GM12878 (cell line): ENCODE measurements at regions of chr1 and their contacts with region 1.

Region 1: DNA sequence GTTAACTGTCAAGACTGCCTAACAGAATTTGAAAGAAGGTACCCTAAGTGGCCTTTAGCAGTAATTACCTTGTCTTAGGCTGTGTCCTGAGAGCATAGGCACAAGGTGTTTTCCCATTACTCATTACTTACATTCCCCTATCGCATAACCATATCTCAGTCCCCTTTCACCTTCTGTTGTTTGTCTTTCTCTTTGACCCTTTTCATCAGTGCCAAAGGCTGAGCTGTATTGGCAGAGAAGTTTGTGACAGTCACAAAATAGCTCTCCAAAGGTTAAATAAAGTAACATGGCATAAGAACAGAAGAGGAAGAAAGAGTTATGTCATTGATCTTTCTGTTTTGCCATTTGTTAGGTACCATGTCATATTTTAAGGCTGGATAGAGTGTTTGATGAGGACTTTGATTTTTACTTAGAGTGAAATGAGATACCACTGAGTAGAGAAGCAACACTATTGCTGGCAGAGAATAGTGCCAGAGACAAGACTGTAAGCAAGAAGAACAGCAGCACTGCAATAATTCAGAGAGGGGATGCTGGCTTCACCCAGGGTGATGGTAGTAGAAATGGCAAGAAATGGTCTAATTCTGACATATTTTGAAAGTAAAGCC is 497.8 kb downstream of the TTLL7 start:
- DNase-seq: peak; percentile 84
- ATAC-seq: peak; percentile 91
- H3K4me3 ChIP-seq: peak overlapping the region; percentile 4; the same call in 1 of the 2 replicates
- H3K27ac ChIP-seq: peak overlapping the region; percentile 90
- H3K4me1 ChIP-seq: peaks cover 34% of the 10 kb centered on the region
- H3K27me3 ChIP-seq: no peaks in the 10 kb centered on the region
- CTCF ChIP-seq: no peak
- EP300 ChIP-seq: peak; percentile 86 to 95
- POLR2A ChIP-seq: no peak
- RAD21 ChIP-seq: 0 out of 2 replicates have a peak, but pooled peaks have one; percentile 18

Region 2: DNA sequence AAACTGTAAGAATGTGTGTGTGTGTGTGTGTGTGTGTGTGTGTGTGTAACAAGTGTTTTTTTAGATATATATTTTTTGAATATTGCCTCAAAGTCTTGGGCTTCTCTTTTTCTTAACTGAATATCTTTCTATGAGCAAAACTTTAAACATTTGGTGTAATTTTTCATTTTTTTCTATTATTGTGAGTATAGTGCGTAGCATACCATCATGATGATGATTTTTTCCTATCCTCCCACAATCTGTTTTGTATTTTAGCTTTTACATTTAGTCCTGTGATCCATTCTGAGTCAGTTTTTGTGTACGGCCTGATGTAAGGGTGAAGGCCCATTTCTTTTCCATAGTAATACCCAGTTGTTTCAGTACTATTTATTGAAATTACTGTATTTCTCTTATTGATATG is 182.7 kb before region 1 on chr1:
- CTCF ChIA-PET with region 1: no interaction called
- POLR2A ChIA-PET with region 1: no interaction called
- RAD21 ChIA-PET with region 1: no interaction called
- SMC1A ChIA-PET with region 1: no interaction called
- in situ Hi-C with region 1: no loop called
- intact Hi-C with region 1: loop called (anchors 5 kb)
- DNase-seq: no peak
- ATAC-seq: no peak
- H3K4me3 ChIP-seq: no peak overlapping the region
- H3K27ac ChIP-seq: no peak overlapping the region
- H3K4me1 ChIP-seq: no peaks in the 10 kb centered on the region
- H3K27me3 ChIP-seq: no peaks in the 10 kb centered on the region
- CTCF ChIP-seq: no peak
- EP300 ChIP-seq: no peak
- POLR2A ChIP-seq: no peak
- RAD21 ChIP-seq: no peak

Region 3: GRCh38 chr1:83490988-83491387 is 10.1 kb before region 1 on chr1:
- CTCF ChIA-PET with region 1: interaction called, 5 read pairs
- POLR2A ChIA-PET with region 1: interaction called, 11 read pairs
- RAD21 ChIA-PET with region 1: interaction called, 7 read pairs
- SMC1A ChIA-PET with region 1: interaction called, 15 read pairs
- in situ Hi-C with region 1: no loop called
- intact Hi-C with region 1: no loop called
- DNase-seq: no peak
- ATAC-seq: no peak
- H3K4me3 ChIP-seq: no peak overlapping the region
- H3K27ac ChIP-seq: no peak overlapping the region; the same call in 1 of the 2 replicates
- H3K4me1 ChIP-seq: no peaks in the 10 kb centered on the region
- H3K27me3 ChIP-seq: no peaks in the 10 kb centered on the region
- CTCF ChIP-seq: no peak
- EP300 ChIP-seq: no peak
- POLR2A ChIP-seq: no peak
- RAD21 ChIP-seq: no peak

Region 4: GRCh38 chr1:83761167-83762038 is 260.3 kb after region 1 on chr1:
- CTCF ChIA-PET with region 1: no interaction called
- POLR2A ChIA-PET with region 1: no interaction called
- RAD21 ChIA-PET with region 1: no interaction called
- SMC1A ChIA-PET with region 1: no interaction called
- in situ Hi-C with region 1: no loop called
- intact Hi-C with region 1: loop called (anchors 5 kb)
- DNase-seq: peak; percentile 45
- ATAC-seq: peak; percentile 99
- H3K4me3 ChIP-seq: no peak overlapping the region
- H3K27ac ChIP-seq: no peak overlapping the region
- H3K4me1 ChIP-seq: peaks cover 6% of the 10 kb centered on the region
- H3K27me3 ChIP-seq: no peaks in the 10 kb centered on the region; a peak in 1 of 4 replicates
- CTCF ChIP-seq: no peak
- EP300 ChIP-seq: no peak
- POLR2A ChIP-seq: no peak
- RAD21 ChIP-seq: peak; percentile 33; the same call in 1 of the 2 replicates